ENCODE measurements at regions of chr1 and their contacts with region 1.

Region 1: GRCh38 chr1:210448297-210448892 is 119.7 kb downstream of the HHAT start:
- DNase-seq: peak; percentile 22
- ATAC-seq: peak; percentile 84
- H3K4me3 ChIP-seq: no peak overlapping the region
- H3K27ac ChIP-seq: no peak overlapping the region
- H3K4me1 ChIP-seq: no peaks in the 10 kb centered on the region
- H3K27me3 ChIP-seq: 0 out of 2 replicates have a peak, but pooled peaks cover 2% of the 10 kb centered on the region
- CTCF ChIP-seq: peak; percentile 76

Region 2: DNA sequence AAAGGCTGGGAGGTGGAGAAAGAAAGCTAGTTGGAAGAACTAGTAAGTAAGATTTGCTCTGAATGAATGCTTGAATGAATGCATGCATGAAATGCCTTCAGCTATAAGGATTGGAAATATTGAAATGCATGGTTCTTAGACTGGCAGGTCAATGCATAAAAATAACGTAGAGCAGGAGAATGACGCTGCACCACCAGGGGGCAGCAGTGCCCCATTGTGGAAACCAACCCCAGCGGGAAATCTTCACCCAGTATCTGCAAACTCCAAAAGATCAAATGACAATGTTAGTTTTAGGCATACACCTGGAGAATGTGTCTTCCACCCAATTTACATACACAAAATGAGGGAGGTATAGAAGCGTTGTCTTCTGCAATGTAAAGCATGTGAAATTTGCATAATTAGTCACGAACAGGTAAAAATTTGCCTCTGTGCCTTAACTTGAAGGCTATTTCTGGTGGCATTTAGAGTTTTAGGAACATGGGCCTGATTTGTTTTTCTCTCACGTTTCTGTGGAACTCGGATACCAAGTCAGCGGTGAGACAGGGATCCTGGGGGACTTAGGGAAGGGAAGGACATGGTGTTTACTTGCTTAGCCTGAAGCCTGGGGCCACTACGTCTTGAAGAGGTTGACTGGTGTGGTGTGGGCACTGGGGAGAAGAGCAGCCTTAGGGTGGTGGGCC is 41.0 kb before region 1 on chr1:
- CTCF ChIA-PET with region 1: no interaction called
- POLR2A ChIA-PET with region 1: interaction called, 4 read pairs
- in situ Hi-C with region 1: no loop called
- intact Hi-C with region 1: loop called (anchors 2 kb)
- DNase-seq: peak; percentile 52
- ATAC-seq: peak; percentile 90
- H3K4me3 ChIP-seq: no peak overlapping the region
- H3K27ac ChIP-seq: no peak overlapping the region
- H3K4me1 ChIP-seq: no peaks in the 10 kb centered on the region
- H3K27me3 ChIP-seq: no peaks in the 10 kb centered on the region
- CTCF ChIP-seq: peak; percentile 95

Region 3: GRCh38 chr1:210584439-210585113 is 136.2 kb after region 1 on chr1:
- CTCF ChIA-PET with region 1: no interaction called
- POLR2A ChIA-PET with region 1: no interaction called
- in situ Hi-C with region 1: no loop called
- intact Hi-C with region 1: loop called (anchors 5 kb)
- DNase-seq: no peak
- ATAC-seq: peak; percentile 95
- H3K4me3 ChIP-seq: no peak overlapping the region
- H3K27ac ChIP-seq: no peak overlapping the region
- H3K4me1 ChIP-seq: no peaks in the 10 kb centered on the region
- H3K27me3 ChIP-seq: no peaks in the 10 kb centered on the region
- CTCF ChIP-seq: peak; percentile 73

Region 4: DNA sequence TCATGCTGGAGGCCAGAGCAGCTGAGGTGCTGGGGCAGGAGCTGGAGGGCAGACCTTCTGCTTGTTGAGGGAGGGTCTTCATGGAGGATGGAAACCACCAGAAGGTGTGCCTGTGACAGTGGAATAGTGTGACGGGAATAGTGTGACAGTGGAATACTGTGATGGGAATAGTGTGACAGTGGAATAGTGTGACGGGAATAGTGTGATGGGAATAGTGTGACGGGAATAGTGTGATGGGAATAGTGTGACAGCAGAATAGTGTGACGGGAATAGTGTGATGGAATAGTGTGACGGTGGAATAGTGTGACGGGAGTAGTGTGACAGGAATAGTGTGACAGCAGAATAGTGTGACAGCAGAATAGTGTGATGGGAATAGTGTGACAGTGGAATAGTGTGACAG is 205.4 kb after region 1 on chr1:
- CTCF ChIA-PET with region 1: no interaction called
- POLR2A ChIA-PET with region 1: no interaction called
- in situ Hi-C with region 1: no loop called
- intact Hi-C with region 1: no loop called
- DNase-seq: no peak
- ATAC-seq: no peak
- H3K4me3 ChIP-seq: no peak overlapping the region
- H3K27ac ChIP-seq: no peak overlapping the region
- H3K4me1 ChIP-seq: no peaks in the 10 kb centered on the region
- H3K27me3 ChIP-seq: no peaks in the 10 kb centered on the region
- CTCF ChIP-seq: no peak

Region 5: GRCh38 chr1:211359876-211360275 is 911.5 kb after region 1 on chr1:
- CTCF ChIA-PET with region 1: no interaction called
- POLR2A ChIA-PET with region 1: no interaction called
- in situ Hi-C with region 1: no loop called
- intact Hi-C with region 1: no loop called
- DNase-seq: no peak
- ATAC-seq: no peak
- H3K4me3 ChIP-seq: no peak overlapping the region
- H3K27ac ChIP-seq: no peak overlapping the region
- H3K4me1 ChIP-seq: no peaks in the 10 kb centered on the region
- H3K27me3 ChIP-seq: no peaks in the 10 kb centered on the region
- CTCF ChIP-seq: no peak

Measured in Panc1 (cell line).